ENCODE measurements at regions of chr4 and their contacts with region 1.

Region 1: DNA sequence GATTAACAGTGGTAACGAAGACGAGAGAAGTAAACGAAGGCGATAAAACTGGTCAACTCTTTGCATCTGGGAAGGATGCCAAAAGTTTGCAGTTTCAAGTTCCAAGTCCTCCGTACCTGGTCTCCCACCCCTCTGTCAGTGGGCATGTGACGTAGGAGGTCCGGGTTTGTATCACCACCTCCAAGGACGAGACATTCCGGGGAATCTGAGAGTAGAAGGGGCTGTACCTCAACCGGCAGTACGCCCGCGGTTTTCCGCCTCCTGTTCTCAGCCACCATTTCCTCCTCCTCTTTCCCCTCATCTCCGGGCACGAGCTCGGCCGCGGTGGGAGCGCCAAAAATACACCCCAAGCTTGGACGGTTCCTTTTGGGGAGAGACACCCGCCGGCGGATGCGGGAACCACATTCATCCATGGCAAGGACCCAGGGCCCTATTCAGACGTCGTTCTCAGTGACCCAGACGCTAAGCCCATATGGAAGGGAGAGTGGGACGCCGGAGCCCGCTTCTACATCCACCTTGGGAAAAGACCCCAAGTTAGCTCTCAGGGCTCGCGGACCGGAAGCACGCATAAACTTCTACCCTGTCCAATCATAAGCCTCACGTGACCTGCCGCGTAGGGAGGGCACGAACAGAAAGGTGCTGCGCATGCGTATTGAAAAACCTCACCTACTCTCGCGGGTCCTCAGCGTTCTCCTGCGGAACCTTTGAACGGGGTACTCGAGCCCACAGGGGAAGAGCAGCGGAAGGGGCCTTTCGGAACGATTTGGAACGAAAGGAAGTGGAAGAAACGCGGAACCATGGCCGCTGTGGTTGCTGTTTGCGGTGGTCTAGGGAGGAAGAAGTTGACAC is at the starts of genes HELQ and MRPS18C:
- DNase-seq: peak; percentile 80 to 99 (median 96)
- ATAC-seq: peak; percentile 86 to 89
- H3K4me3 Mint-ChIP-seq: peak within 1 kb of the TSS; percentile 98 to 100 (median 100)
- H3K27ac Mint-ChIP-seq: peak within 1 kb of the TSS; percentile 100
- H3K4me1 Mint-ChIP-seq: peaks cover 16 to 59% (median 58%) of the 10 kb centered on the region in 4 donors
- H3K27me3 Mint-ChIP-seq: no peaks in the 10 kb centered on the region
- polyA plus RNA-seq, gene HELQ: 16.7 to 27.5 (median 19.9) TPM
- polyA plus RNA-seq, gene MRPS18C: 45.4 to 64.6 (median 50.5) TPM

Region 2: GRCh38 chr4:83034630-83035494 is 420.6 kb before region 1 on chr4 and contains the start of gene COPS4:
- POLR2A ChIA-PET with region 1: interaction called, 11 read pairs
- DNase-seq: peak; percentile 83 to 98 (median 95)
- ATAC-seq: peak; percentile 94 to 96
- H3K4me3 Mint-ChIP-seq: peak within 1 kb of the TSS; percentile 91 to 100 (median 100)
- H3K27ac Mint-ChIP-seq: peak within 1 kb of the TSS; percentile 97 to 100 (median 99)
- H3K4me1 Mint-ChIP-seq: peaks cover 9 to 47% (median 36%) of the 10 kb centered on the region in 4 donors
- H3K27me3 Mint-ChIP-seq: peaks cover 0 to 1% (median 0%) of the 10 kb centered on the region in 5 donors
- polyA plus RNA-seq, gene COPS4: 58.4 to 62.5 (median 61.2) TPM

Region 3: GRCh38 chr4:83284193-83285054 is 171.1 kb before region 1 on chr4 and contains the start of gene COQ2:
- POLR2A ChIA-PET with region 1: interaction called, 12 read pairs
- DNase-seq: peak; percentile 87 to 96 (median 93)
- ATAC-seq: peak; percentile 90
- H3K4me3 Mint-ChIP-seq: peak within 1 kb of the TSS; percentile 87 to 99 (median 98)
- H3K27ac Mint-ChIP-seq: peak within 1 kb of the TSS; percentile 96 to 99 (median 98)
- H3K4me1 Mint-ChIP-seq: peaks cover 18 to 54% (median 33%) of the 10 kb centered on the region in 4 donors
- H3K27me3 Mint-ChIP-seq: no peaks in the 10 kb centered on the region
- polyA plus RNA-seq, gene COQ2: 5.0 to 8.1 (median 5.2) TPM

Region 4: GRCh38 chr4:83440899-83441298 is 14.6 kb before region 1 on chr4:
- POLR2A ChIA-PET with region 1: interaction called, 14 read pairs
- DNase-seq: no peak
- ATAC-seq: no peak
- H3K4me3 Mint-ChIP-seq: no peak overlapping the region
- H3K27ac Mint-ChIP-seq: peak overlapping the region in 1 of 10 donors; percentile 41
- H3K4me1 Mint-ChIP-seq: peaks cover 6 to 17% (median 7%) of the 10 kb centered on the region in 4 donors
- H3K27me3 Mint-ChIP-seq: no peaks in the 10 kb centered on the region

Region 5: GRCh38 chr4:83484500-83485461 is 29.3 kb after region 1 on chr4 and contains the start of gene ABRAXAS1:
- POLR2A ChIA-PET with region 1: interaction called, 36 read pairs
- DNase-seq: peak; percentile 90 to 99 (median 95)
- ATAC-seq: peak; percentile 91
- H3K4me3 Mint-ChIP-seq: peak within 1 kb of the TSS; percentile 92 to 99 (median 98)
- H3K27ac Mint-ChIP-seq: peak within 1 kb of the TSS; percentile 97 to 99 (median 98)
- H3K4me1 Mint-ChIP-seq: peaks cover 13 to 44% (median 33%) of the 10 kb centered on the region in 4 donors
- H3K27me3 Mint-ChIP-seq: no peaks in the 10 kb centered on the region
- polyA plus RNA-seq, gene ABRAXAS1: 13.8 to 15.3 (median 14.0) TPM